ENCODE measurements at regions of chr20 and their contacts with region 1.

Region 1: GRCh38 chr20:50395258-50395729 is 114.9 kb upstream of the PTPN1 start:
- DNase-seq: peak; percentile 83 to 93 (median 90)
- ATAC-seq: peak; percentile 86 to 89
- H3K4me3 ChIP-seq: no peak overlapping the region
- H3K27ac ChIP-seq: peak overlapping the region; percentile 94
- H3K4me1 ChIP-seq: peaks cover 16% of the 10 kb centered on the region
- H3K27me3 ChIP-seq: no peaks in the 10 kb centered on the region

Region 2: DNA sequence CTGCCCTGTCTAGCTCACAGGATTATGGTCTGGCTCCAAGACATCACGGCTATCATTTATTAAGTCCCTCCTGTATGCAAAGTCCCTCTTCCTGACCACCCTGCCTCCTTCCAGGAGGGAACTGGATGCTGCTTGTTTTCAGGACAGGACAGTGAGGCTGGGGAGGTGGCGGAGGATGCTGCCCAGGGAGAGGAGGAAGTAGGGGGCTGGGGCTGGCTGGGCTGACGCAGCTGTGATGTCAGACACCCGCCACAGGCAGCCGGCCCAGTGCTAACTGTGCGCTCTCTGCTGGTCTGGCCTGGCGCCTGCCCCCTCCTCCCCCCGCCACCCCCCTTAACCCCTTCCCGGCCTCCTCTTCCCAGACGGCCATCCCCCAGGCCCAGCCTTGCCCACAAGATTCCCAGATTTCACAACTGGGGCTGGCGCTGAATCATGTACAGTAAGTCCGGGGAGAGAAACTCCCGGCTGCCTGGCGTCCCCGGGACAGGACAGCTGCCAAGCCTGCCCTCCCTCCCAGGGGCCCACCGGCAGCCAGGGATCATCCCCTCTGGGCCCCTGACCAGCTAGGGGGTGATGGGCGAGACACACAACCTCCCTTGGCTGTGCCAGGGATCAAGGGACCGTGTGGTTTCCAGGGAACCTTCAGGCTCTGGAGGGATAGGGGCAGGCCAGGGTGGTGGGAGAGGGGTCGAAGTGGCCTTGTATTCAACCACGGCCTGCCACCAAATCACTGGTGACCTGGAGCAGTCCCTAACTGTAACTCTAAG is 86.6 kb before region 1 on chr20:
- intact Hi-C with region 1: loop called in 1 of 4 experiments (anchors 10 kb)
- DNase-seq: peak; percentile 94 to 97 (median 96)
- ATAC-seq: peak; percentile 76 to 85
- H3K4me3 ChIP-seq: no peak overlapping the region
- H3K27ac ChIP-seq: peak overlapping the region; percentile 77
- H3K4me1 ChIP-seq: peaks cover 22% of the 10 kb centered on the region
- H3K27me3 ChIP-seq: no peaks in the 10 kb centered on the region

Region 3: GRCh38 chr20:50320910-50321796 is 74.1 kb before region 1 on chr20:
- intact Hi-C with region 1: no loop called
- DNase-seq: peak; percentile 91 to 96 (median 94)
- ATAC-seq: peak; percentile 92 to 96
- H3K4me3 ChIP-seq: no peak overlapping the region
- H3K27ac ChIP-seq: no peak overlapping the region
- H3K4me1 ChIP-seq: peaks cover under 1% of the 10 kb centered on the region
- H3K27me3 ChIP-seq: no peaks in the 10 kb centered on the region

Measured in right cardiac atrium (tissue), 5 donors.